Upper lobe of right lung (tissue), 1 donor: ENCODE measurements at regions of chr22 and their contacts with region 1.

Region 1: DNA sequence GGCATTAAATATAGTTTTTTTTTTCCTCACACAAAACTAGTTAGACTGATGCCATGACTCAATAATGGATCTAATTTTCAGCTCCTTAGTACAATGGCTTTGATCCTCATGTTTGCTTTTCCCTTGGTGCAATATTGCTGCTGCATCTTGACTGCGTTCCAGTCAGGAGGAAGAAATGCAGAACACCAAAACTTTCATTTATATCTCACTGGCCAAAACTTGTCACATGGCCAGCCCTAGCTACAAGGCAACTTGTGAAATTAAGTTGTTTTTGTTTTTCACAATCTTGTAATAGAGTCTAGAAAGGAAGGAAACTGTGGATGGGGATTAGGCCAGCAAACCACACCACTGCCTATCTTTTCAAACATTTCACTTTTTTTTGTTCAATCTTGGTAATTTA is 36.7 kb downstream of the SMC1B start:
- DNase-seq: no peak
- ATAC-seq: peak; percentile 66
- H3K4me3 ChIP-seq: no peak overlapping the region
- H3K27ac ChIP-seq: no peak overlapping the region
- H3K4me1 ChIP-seq: peaks cover 4% of the 10 kb centered on the region
- H3K27me3 ChIP-seq: no peaks in the 10 kb centered on the region
- CTCF ChIP-seq: no peak

Region 2: DNA sequence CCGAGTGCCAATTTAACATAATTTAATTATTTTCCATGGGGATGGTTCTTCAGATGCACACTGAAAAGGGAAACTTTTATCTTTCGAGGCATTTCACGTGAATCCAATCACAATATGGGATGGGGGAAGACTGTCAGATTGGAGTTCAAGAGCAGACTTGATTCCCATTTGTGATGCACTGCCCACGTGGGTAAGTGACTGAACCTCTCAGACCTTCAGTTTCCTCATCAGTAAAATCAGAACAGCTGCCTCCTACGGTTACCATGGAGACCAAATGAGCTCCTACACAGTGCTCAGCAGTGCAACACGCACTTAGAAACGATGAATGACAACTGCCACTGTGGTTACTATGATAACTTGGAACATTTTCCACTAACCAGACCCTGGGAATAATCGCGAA is 157.7 kb before region 1 on chr22:
- intact Hi-C with region 1: no loop called
- DNase-seq: no peak
- ATAC-seq: peak; percentile 69
- H3K4me3 ChIP-seq: no peak overlapping the region
- H3K27ac ChIP-seq: no peak overlapping the region
- H3K4me1 ChIP-seq: no peaks in the 10 kb centered on the region
- H3K27me3 ChIP-seq: no peaks in the 10 kb centered on the region
- CTCF ChIP-seq: no peak

Region 3: GRCh38 chr22:45290410-45290936 is 86.2 kb before region 1 on chr22:
- intact Hi-C with region 1: loop called (anchors 10 kb)
- DNase-seq: no peak
- ATAC-seq: no peak
- H3K4me3 ChIP-seq: no peak overlapping the region
- H3K27ac ChIP-seq: no peak overlapping the region
- H3K4me1 ChIP-seq: no peaks in the 10 kb centered on the region
- H3K27me3 ChIP-seq: peaks cover 7% of the 10 kb centered on the region
- CTCF ChIP-seq: no peak